Activated T-helper 1 cell treated with anti-CD3 and anti-CD28 coated beads, Interleukin-12 subunit alpha, Interleukin-12 subunit beta, Interleukin-2, Interleukin-4 antibody, amounts not matched to agents 30 ng/mL and 10 ng/mL and 1 ng/mL, durations not matched to agents 14 hours and 24 hours and 36 hours (primary cell): ENCODE measurements at regions of chr16 and their contacts with region 1.

Region 1: GRCh38 chr16:57013229-57013628 is 23.9 kb downstream of the NLRC5 start:
- DNase-seq: no peak
- H3K4me3 Mint-ChIP-seq: peak overlapping the region; percentile 50
- H3K27ac Mint-ChIP-seq: peak overlapping the region; percentile 81
- H3K4me1 Mint-ChIP-seq: peaks cover 80% of the 10 kb centered on the region
- H3K27me3 Mint-ChIP-seq: no peaks in the 10 kb centered on the region

Region 2: GRCh38 chr16:56931892-56932720 is 81.1 kb before region 1 on chr16 and contains the start of gene HERPUD1:
- intact Hi-C with region 1: loop called (anchors 5 kb)
- DNase-seq: peak; percentile 99
- H3K4me3 Mint-ChIP-seq: peak within 1 kb of the TSS; percentile 95
- H3K27ac Mint-ChIP-seq: peak within 1 kb of the TSS; percentile 94
- H3K4me1 Mint-ChIP-seq: peaks cover 41% of the 10 kb centered on the region
- H3K27me3 Mint-ChIP-seq: no peaks in the 10 kb centered on the region
- total RNA-seq, gene HERPUD1: 176 and 178 TPM in 2 replicates

Region 3: GRCh38 chr16:56988948-56989945 is 24.0 kb before region 1 on chr16 and contains the start of gene NLRC5:
- intact Hi-C with region 1: loop called (anchors 1 kb)
- DNase-seq: peak; percentile 89
- H3K4me3 Mint-ChIP-seq: peak within 1 kb of the TSS; percentile 97
- H3K27ac Mint-ChIP-seq: peak within 1 kb of the TSS; percentile 97
- H3K4me1 Mint-ChIP-seq: peaks cover 83% of the 10 kb centered on the region
- H3K27me3 Mint-ChIP-seq: no peaks in the 10 kb centered on the region
- total RNA-seq, gene NLRC5: 164 and 175 TPM in 2 replicates

Region 4: DNA sequence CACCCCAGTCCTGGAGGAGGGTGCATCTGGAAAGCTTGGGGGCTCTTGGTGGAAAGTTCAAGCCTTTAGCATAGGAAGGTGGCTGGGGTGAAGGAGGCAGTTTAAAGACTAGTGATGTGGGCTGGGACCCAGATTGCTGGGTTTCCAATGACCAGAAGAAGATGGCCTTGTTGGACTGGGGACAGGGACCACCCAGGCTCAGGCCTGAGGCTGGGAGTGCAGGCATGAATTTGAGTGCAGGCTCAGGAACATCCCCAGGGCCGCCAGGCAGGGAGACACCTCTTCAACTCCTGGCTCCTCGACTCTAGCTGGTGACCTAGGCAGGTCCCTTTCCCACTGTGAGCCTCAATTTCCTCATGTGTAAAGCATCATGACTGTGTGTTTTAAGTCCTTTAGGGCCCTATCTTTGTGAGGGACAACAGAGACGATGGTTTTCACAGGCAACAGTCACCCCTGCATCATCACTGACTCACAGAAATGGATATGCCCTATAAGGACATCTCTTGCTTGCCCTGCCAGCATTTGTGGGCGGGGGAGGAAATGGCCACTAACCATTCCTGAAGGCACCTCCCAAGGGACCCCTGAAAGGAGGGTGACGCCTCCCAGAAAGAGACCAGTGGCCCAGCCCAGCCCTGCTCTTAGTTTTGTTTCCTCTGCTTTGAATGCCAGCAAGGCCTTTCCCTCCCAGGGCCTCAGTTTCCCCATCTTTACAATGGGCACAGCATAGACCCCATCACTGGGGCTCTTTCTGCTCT is 12.8 kb before region 1 on chr16:
- intact Hi-C with region 1: loop called (anchors 1 kb)
- DNase-seq: no peak
- H3K4me3 Mint-ChIP-seq: peak overlapping the region; percentile 54
- H3K27ac Mint-ChIP-seq: peak overlapping the region; percentile 91
- H3K4me1 Mint-ChIP-seq: peaks cover 90% of the 10 kb centered on the region
- H3K27me3 Mint-ChIP-seq: no peaks in the 10 kb centered on the region